ENCODE measurements at regions of chr14 and their contacts with region 1.

Region 1: DNA sequence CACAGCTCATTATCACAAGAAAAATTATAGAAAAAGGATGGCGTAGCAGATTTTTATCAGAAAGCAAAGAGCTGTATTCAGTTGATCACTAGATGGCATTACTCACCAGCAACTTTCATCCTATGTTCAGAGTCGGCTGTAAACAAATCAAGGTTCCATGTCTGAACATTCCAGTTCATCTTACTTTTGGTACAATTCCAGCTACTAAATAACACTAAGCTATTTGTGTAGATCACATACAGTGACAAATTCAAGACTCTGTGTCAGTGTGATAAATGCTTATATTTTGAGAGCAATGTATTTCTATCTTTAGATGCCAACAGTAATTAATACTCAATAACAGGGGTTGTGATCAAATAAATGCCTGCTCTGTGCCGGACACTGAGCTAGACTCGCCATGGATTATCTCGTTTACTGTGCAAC is 30.1 kb downstream of the NRDE2 start:
- DNase-seq: peak; percentile 51
- H3K4me3 ChIP-seq: no peak overlapping the region
- H3K27ac ChIP-seq: peak overlapping the region in 1 of 2 experiments; percentile 47; a peak in 1 of 4 replicates
- H3K4me1 ChIP-seq: no peaks in the 10 kb centered on the region; a peak in 1 of 4 replicates
- H3K27me3 ChIP-seq: no peaks in the 10 kb centered on the region
- CTCF ChIP-seq: peak; percentile 67
- EP300 ChIP-seq: no peak
- RAD21 ChIP-seq: peak; percentile 88

Region 2: GRCh38 chr14:90177539-90178189 is 124.0 kb before region 1 on chr14:
- CTCF ChIA-PET with region 1: no interaction called
- POLR2A ChIA-PET with region 1: no interaction called
- DNase-seq: no peak
- H3K4me3 ChIP-seq: no peak overlapping the region
- H3K27ac ChIP-seq: no peak overlapping the region
- H3K4me1 ChIP-seq: peaks cover 0 to 8% of the 10 kb centered on the region in 2 experiments; a peak in 2 of 4 replicates
- H3K27me3 ChIP-seq: no peaks in the 10 kb centered on the region
- CTCF ChIP-seq: no peak
- EP300 ChIP-seq: no peak
- RAD21 ChIP-seq: no peak

Region 3: DNA sequence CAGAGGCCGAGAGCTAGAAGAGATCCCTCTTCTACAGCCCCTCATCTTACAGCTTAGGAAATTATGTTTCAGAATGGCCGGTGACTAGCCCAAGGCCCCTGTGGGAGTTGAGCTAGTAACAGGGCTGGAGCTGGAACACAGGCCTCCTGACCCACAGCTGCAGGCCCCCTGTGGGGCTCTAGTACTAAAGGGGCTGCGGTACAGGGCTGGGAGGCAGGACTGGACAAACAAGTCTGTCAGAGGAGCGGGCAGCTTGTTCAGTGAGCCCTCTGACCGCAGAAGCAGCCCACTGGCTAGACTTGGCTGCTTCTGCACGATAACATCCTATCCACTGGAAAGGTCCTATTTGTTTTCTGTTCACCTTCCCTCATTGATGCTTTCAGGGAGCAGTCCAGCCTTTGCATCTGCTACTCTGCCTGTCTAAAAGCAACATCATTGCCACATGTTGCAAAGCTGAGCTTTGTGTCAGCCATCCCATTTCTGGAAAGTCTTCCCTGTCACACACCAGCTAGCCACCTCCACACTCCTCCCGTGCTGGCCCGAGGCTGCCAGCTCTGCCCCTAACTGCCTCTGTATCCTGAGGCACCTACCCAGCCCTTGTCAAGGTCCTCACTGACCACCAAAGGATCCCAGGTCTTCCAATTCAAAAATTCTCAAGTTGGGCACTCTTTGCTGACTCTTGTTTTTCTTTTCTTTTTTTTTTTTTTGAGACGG is 35.1 kb before region 1 on chr14:
- CTCF ChIA-PET with region 1: no interaction called
- POLR2A ChIA-PET with region 1: no interaction called
- DNase-seq: no peak
- H3K4me3 ChIP-seq: no peak overlapping the region
- H3K27ac ChIP-seq: no peak overlapping the region
- H3K4me1 ChIP-seq: no peaks in the 10 kb centered on the region
- H3K27me3 ChIP-seq: no peaks in the 10 kb centered on the region
- CTCF ChIP-seq: no peak
- EP300 ChIP-seq: no peak
- RAD21 ChIP-seq: no peak

Region 4: DNA sequence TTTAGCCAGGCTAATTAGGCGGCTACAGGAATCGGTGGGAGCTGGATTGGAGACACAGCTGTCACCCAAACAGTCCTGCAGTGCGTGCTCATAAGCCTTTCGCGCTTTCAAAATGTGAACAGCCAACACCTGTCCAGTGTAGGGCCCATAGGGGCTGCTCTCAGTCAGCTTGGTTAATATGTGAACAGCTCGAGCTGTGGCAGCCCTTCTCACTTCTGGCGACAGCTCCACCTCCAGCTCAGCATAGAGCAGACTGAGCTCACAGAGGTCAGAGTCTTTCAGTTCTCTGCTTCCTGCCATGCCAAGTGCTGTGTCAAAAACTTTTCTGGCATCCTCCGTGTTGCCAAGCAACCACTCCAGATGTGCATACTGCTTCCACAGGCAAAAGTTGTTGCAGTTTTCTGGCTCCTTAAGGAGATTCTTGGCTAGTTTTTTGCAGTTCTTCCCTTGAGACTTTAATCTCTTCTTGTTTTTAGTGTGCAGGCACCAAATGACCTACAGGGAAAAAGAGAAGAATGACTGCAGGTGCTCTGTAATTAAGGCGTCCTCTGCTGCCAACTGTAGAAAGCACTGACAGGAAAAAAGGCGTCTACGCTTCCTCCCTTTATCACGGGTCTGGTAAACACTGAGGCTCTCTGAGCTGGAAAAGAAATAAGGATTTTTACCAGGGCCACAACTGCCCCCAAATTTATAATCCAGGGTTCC is 12.9 kb before region 1 on chr14:
- CTCF ChIA-PET with region 1: interaction called, 12 read pairs
- POLR2A ChIA-PET with region 1: no interaction called
- DNase-seq: no peak
- H3K4me3 ChIP-seq: no peak overlapping the region
- H3K27ac ChIP-seq: no peak overlapping the region
- H3K4me1 ChIP-seq: peaks cover 0 to 9% of the 10 kb centered on the region in 2 experiments; a peak in 1 of 4 replicates
- H3K27me3 ChIP-seq: no peaks in the 10 kb centered on the region
- CTCF ChIP-seq: no peak
- EP300 ChIP-seq: no peak
- RAD21 ChIP-seq: no peak

Measured in SK-N-SH (cell line).